ENCODE measurements at regions of chr9 and their contacts with region 1.

Region 1: GRCh38 chr9:34252670-34253459 is 74.0 kb downstream of the UBAP1 start:
- DNase-seq: peak in 4 of 5 donors; percentile 63 to 73 (median 71)
- ATAC-seq: peak; percentile 25 to 61 (median 43)
- H3K4me3 ChIP-seq: peak overlapping the region in 1 of 12 donors; percentile 4
- H3K27ac ChIP-seq: peak overlapping the region; percentile 57 to 86 (median 79)
- H3K4me1 ChIP-seq: peaks cover 0 to 76% (median 49%) of the 10 kb centered on the region in 12 donors
- H3K27me3 ChIP-seq: no peaks in the 10 kb centered on the region
- CTCF ChIP-seq: peak; percentile 52 to 98 (median 92)
- POLR2A ChIP-seq: no peak

Region 2: DNA sequence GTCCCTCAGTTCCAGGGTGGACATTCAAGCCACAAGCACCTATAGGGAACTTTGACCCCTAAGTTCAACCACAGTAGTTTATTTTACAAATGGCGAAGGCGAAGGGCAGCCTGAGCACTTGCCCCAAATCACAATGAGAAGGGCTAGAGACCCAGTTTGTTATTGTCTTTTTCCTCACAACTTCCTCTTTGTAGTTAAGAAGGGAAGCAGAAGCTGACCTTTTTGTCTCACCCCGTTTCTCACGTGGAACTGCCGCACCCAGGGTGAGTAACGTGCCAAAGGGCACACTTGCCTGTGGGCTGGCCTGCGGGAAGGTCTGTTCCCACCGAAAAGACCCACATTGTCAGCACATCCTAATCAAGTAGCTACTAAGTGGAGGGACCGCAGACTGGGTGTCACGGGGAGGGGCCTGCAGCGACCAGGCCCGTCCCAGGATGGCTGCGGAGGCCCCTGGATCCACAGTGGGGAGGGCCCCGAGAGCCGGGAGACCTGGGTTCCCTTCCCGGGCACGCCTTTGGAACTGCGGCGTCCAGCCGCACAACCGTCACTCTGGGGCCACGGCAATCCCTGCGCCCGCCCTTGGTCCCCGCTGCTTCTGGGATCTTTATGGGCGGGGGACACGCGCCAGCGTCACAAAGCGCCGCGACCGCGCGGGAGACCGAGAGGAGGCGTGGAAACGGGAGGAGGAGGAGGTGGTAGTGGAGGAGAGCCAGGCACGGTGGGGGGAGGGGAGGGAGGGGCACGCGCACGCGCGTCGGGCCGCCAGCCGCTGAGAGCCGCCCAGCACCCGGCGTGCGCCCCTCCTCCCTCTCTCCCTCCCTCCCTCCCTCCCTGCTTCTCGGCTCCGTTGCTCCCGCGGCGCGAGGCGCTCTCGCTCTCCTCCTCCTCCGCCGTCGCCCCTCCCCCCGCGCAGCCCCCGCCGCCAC is 436.3 kb before region 1 on chr9 and contains the start of gene UBE2R2:
- intact Hi-C with region 1: loop called in 1 of 10 experiments (anchors 10 kb)
- DNase-seq: peak; percentile 94 to 97 (median 95)
- ATAC-seq: peak; percentile 85 to 92 (median 90)
- H3K4me3 ChIP-seq: peak within 1 kb of the TSS; percentile 80 to 98 (median 93)
- H3K27ac ChIP-seq: peak within 1 kb of the TSS; percentile 96 to 100 (median 99)
- H3K4me1 ChIP-seq: peaks cover 9 to 60% (median 46%) of the 10 kb centered on the region in 12 donors
- H3K27me3 ChIP-seq: no peaks in the 10 kb centered on the region
- CTCF ChIP-seq: no peak
- POLR2A ChIP-seq: peak in 1 of 2 donors; percentile 84
- total RNA-seq, gene UBE2R2: 29.4 to 45.7 (median 40.3) TPM

Region 3: GRCh38 chr9:34025062-34025461 is 227.8 kb before region 1 on chr9:
- intact Hi-C with region 1: loop called in 2 of 10 experiments (anchors 10 kb)
- DNase-seq: no peak
- ATAC-seq: peak; percentile 93 to 95 (median 95)
- H3K4me3 ChIP-seq: no peak overlapping the region
- H3K27ac ChIP-seq: peak overlapping the region in 11 of 12 donors; percentile 49 to 81 (median 72)
- H3K4me1 ChIP-seq: peaks cover 0 to 25% (median 4%) of the 10 kb centered on the region in 12 donors
- H3K27me3 ChIP-seq: no peaks in the 10 kb centered on the region
- CTCF ChIP-seq: no peak
- POLR2A ChIP-seq: no peak

Region 4: DNA sequence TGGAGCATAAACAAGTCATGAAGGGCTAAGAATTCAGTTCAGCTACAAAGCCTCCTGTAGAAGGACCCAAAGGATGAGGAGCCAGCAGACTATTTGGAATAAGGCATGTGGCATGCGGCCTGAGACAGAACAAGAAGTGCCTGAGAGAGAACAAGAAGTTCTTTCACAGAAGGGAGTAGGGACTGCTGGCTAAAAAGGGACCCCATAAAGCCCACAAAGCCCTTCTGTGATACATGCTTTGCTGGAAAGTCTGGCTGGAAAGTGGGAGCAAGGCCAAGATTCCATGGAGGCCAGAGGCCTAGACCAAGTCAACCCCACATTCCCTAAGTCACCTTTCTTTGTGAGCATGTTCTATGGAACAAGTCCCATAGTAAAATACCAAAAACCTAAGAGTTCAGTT is 168.3 kb before region 1 on chr9:
- intact Hi-C with region 1: loop called in 1 of 10 experiments (anchors 10 kb)
- DNase-seq: peak in 4 of 5 donors; percentile 24 to 80 (median 38)
- ATAC-seq: peak; percentile 65 to 80 (median 75)
- H3K4me3 ChIP-seq: no peak overlapping the region
- H3K27ac ChIP-seq: peak overlapping the region; percentile 22 to 88 (median 53)
- H3K4me1 ChIP-seq: peaks cover 0 to 45% (median 13%) of the 10 kb centered on the region in 12 donors
- H3K27me3 ChIP-seq: no peaks in the 10 kb centered on the region
- CTCF ChIP-seq: no peak
- POLR2A ChIP-seq: no peak

Region 5: GRCh38 chr9:34178520-34179212 is 74.2 kb before region 1 on chr9 and contains the start of gene UBAP1:
- intact Hi-C with region 1: loop called in 8 of 10 experiments (anchors 2 to 10 kb)
- DNase-seq: peak; percentile 97 to 98 (median 97)
- ATAC-seq: peak; percentile 99 to 100 (median 100)
- H3K4me3 ChIP-seq: peak within 1 kb of the TSS; percentile 34 to 95 (median 76)
- H3K27ac ChIP-seq: peak within 1 kb of the TSS; percentile 84 to 96 (median 92)
- H3K4me1 ChIP-seq: peaks cover 0 to 23% (median 11%) of the 10 kb centered on the region in 12 donors
- H3K27me3 ChIP-seq: no peaks in the 10 kb centered on the region
- CTCF ChIP-seq: peak in 2 of 12 donors; percentile 7 to 9
- POLR2A ChIP-seq: peak in 1 of 2 donors; percentile 81
- total RNA-seq, gene UBAP1: 35.1 to 55.6 (median 43.1) TPM

Region 6: DNA sequence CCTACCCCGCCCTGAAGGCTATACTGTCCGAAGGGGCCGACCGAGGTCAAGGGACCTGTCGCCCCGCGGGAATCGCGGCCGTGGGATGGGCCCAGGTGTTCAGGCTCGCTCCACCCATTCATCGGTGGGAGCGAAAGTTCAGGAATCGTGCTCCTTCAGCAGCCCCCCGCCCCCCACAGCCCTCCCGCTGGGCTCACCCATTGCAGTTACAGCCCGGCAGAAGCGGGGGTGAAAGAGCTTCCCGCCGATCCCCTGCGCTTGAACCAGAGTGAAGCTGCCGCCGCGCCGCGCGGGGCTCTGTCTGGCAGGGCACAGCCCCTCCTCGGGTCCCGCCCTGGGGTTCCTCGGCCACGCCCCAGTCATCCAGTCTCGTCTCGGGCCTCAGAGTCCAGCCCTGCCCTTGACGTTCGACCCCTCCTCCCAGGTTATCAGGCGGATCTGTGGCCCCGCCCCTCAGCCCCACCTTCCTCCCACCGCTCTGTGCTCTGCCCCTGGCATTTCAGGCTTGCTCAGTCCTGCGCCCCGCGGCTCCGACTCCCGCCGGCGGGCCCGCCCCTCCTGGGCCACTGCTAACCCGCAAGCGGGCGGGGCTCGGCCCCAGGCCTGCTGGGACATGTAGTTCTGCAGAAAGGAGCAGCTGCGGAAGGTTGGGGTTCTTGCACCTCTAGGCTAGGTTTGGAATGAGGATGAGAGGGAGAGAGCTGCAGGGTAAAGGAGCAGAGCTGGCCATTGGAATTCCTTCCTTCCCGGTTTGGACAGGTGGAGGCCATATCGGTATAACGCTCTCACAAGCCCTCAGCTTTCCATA is 123.9 kb after region 1 on chr9 and contains the start of gene MYORG:
- intact Hi-C with region 1: loop called in 6 of 10 experiments (anchors 5 kb)
- DNase-seq: peak; percentile 90 to 95 (median 93)
- ATAC-seq: peak; percentile 78 to 86 (median 83)
- H3K4me3 ChIP-seq: peak within 1 kb of the TSS; percentile 57 to 90 (median 80)
- H3K27ac ChIP-seq: peak within 1 kb of the TSS; percentile 31 to 85 (median 76)
- H3K4me1 ChIP-seq: peaks cover 0 to 51% (median 28%) of the 10 kb centered on the region in 12 donors
- H3K27me3 ChIP-seq: peaks cover 0 to 6% (median 0%) of the 10 kb centered on the region in 9 donors
- CTCF ChIP-seq: no peak
- POLR2A ChIP-seq: peak in 1 of 2 donors; percentile 60
- total RNA-seq, gene MYORG: 3.5 to 10.2 (median 6.7) TPM

Measured in heart left ventricle (tissue), 16 donors.